H1 (cell line): ENCODE measurements at regions of chr3 and their contacts with region 1.

Region 1: DNA sequence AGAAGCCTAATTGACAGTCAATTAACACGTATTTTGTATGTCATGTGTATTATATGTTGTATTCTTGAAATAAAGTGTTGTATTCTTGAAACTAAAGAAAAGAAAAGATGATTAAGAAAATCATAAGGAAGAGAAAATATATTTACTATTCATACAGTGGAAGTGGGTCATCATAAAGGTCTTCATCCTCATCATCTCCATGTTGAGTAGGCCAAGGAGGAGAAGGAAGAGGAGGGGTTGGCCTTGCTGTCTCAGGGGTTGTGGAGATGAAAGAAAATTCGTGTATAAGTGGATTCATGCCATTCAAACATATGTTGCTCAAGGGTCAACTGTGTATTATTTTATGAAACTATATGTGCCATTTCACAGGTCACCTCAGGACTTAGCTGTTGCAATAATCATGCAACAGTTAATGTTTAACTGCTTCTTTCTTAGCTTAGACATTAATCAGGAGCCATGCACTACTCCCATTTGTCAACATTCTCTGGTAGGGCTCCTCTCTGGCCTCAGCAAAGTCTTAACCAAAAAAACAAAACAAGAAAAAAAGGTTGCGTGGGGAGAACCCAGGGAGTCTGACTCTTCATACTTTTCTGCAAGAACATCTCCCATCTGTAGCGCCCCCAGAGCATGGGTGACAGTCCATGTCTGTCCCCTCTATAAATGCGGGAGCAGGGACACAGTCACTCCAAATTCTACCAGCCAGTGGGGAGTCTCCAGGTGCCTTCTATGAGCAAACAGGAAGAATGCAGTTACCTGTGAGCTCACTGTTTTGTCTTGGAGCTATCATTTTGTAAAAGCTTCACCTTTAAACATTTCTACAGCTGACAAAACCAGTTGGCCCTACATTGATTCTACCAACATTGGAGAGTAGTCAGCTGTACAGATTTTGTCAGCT is 19.9 kb upstream of the LRRC2 start:
- DNase-seq: no peak
- H3K4me3 ChIP-seq: no peak overlapping the region
- H3K27ac ChIP-seq: no peak overlapping the region
- H3K4me1 ChIP-seq: peaks cover 0 to under 1% (median 0%) of the 10 kb centered on the region in 4 experiments; a peak in 1 of 7 replicates
- H3K27me3 ChIP-seq: no peaks in the 10 kb centered on the region
- CTCF ChIP-seq: no peak
- EP300 ChIP-seq: no peak
- POLR2A ChIP-seq: peak in 1 of 2 experiments; percentile 46; a peak in 1 of 3 replicates
- RAD21 ChIP-seq: no peak

Region 2: GRCh38 chr3:46496741-46497554 is 89.1 kb before region 1 on chr3:
- CTCF ChIA-PET with region 1: interaction called, 19 read pairs
- POLR2A ChIA-PET with region 1: interaction called, 21 read pairs
- DNase-seq: peak; percentile 36 to 75
- H3K4me3 ChIP-seq: no peak overlapping the region
- H3K27ac ChIP-seq: no peak overlapping the region
- H3K4me1 ChIP-seq: peaks cover 0 to 7% (median 1%) of the 10 kb centered on the region in 4 experiments; a peak in 2 of 7 replicates
- H3K27me3 ChIP-seq: peaks cover 0 to 4% (median 0%) of the 10 kb centered on the region in 4 experiments; a peak in 1 of 7 replicates
- CTCF ChIP-seq: peak; percentile 41 to 68 (median 60)
- EP300 ChIP-seq: no peak
- POLR2A ChIP-seq: no peak
- RAD21 ChIP-seq: peak; percentile 58 to 69

Region 3: DNA sequence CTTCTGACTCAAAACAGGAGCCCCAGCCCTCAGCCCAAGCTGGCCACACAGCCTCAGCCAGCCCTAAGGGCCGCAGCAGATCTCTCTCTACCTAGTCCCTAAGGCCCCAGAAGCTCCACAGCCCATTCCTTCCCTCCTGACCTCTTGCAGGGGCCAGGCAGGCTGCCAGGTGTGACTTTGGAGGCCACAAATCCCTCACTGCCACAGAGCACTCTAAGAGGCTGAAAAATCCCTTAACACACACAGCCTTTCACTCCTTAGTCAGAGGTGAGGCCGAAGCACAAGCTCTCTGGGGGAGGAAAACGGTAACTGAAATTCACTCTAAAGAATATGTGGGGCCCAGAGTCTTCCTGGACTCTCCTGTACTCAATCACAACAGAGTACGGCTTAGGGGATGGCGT is 43.2 kb before region 1 on chr3:
- CTCF ChIA-PET with region 1: interaction called, 4 read pairs
- POLR2A ChIA-PET with region 1: interaction called, 11 read pairs
- DNase-seq: no peak
- H3K4me3 ChIP-seq: no peak overlapping the region
- H3K27ac ChIP-seq: 0 out of 2 replicates have a peak overlapping the region, but pooled peaks have one; percentile 5
- H3K4me1 ChIP-seq: peaks cover 14 to 21% (median 18%) of the 10 kb centered on the region in 4 experiments
- H3K27me3 ChIP-seq: no peaks in the 10 kb centered on the region
- CTCF ChIP-seq: no peak
- EP300 ChIP-seq: no peak
- POLR2A ChIP-seq: no peak
- RAD21 ChIP-seq: no peak

Region 4: DNA sequence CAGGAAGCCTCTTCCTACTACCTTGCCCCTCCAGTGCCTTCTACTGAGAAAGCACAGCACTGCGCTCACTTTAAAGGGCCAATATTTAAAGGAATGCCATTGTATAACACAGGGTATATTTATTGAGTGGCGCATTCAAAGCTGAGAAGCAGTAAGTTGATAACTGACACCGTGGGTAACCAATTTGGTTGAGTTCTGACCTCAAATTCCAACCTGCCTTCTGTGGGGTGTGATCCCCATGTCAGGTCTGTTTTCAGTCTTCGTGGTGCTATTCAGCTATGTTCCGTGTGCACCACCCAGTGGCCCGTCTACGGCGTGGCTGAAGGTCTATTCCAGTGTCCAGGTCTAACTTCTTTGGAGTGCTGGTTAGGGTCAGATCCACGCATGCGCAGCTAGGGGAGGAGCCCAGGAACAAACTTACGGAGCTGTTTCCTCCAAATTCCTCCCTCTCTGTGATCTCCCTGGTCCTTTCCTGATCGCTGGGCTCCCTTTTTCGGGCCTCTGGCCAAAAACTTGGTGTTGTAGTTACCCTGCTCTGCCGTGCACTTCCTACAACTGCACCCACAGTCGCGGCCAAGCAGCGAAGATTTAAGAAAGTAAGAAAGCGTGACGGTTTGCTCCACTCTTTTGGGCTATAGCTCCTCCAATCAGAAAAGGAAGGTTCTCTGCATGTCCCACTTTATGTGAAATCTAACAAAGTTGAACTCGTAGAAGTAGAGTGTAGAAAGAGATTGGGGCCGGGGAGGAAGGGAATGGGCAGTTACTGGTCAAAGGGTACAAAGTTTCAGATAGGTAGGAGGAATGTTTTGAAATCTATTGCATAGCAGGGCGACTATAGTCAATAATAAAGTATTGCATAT is 27.6 kb before region 1 on chr3:
- CTCF ChIA-PET with region 1: interaction called, 9 read pairs
- POLR2A ChIA-PET with region 1: interaction called, 21 read pairs
- DNase-seq: peak in 1 of 2 experiments; percentile 57
- H3K4me3 ChIP-seq: peak overlapping the region in 1 of 4 experiments; percentile 13; a peak in 1 of 8 replicates
- H3K27ac ChIP-seq: no peak overlapping the region
- H3K4me1 ChIP-seq: peaks cover 3 to 12% (median 5%) of the 10 kb centered on the region in 4 experiments; a peak in 5 of 7 replicates
- H3K27me3 ChIP-seq: no peaks in the 10 kb centered on the region; a peak in 1 of 7 replicates
- CTCF ChIP-seq: peak; percentile 67 to 80 (median 71)
- EP300 ChIP-seq: no peak
- POLR2A ChIP-seq: no peak
- RAD21 ChIP-seq: peak; percentile 81 to 85

Region 5: DNA sequence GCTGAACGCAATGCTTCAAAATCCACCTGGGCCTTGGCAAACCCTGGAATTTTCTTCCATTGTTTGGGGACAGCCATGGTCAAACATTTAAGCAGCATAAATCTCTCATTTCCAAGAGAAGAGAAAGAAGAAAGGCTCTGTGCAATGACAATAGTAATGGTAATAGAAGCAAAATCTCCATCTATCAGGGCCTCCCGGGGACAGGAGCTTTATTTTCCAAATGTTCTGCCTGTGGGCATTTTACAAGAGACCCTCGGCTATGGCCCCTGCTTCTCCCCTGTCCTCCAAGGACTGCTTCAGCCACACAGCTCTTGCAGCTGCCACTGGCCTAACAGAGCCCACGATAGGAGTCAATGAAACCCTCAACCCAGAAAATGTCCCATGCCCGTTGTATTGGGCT is 13.5 kb after region 1 on chr3:
- CTCF ChIA-PET with region 1: interaction called, 6 read pairs
- POLR2A ChIA-PET with region 1: interaction called, 85 read pairs
- DNase-seq: no peak
- H3K4me3 ChIP-seq: peak overlapping the region in 1 of 4 experiments; percentile 18; a peak in 1 of 8 replicates
- H3K27ac ChIP-seq: peak overlapping the region; percentile 17; the same call in 1 of the 2 replicates
- H3K4me1 ChIP-seq: peaks cover 10 to 22% (median 15%) of the 10 kb centered on the region in 4 experiments; a peak in 6 of 7 replicates
- H3K27me3 ChIP-seq: 0 out of 7 replicates have a peak, but pooled peaks cover 0 to 3% (median 0%) of the 10 kb centered on the region in 4 experiments
- CTCF ChIP-seq: no peak
- EP300 ChIP-seq: no peak
- POLR2A ChIP-seq: no peak
- RAD21 ChIP-seq: no peak

Region 6: DNA sequence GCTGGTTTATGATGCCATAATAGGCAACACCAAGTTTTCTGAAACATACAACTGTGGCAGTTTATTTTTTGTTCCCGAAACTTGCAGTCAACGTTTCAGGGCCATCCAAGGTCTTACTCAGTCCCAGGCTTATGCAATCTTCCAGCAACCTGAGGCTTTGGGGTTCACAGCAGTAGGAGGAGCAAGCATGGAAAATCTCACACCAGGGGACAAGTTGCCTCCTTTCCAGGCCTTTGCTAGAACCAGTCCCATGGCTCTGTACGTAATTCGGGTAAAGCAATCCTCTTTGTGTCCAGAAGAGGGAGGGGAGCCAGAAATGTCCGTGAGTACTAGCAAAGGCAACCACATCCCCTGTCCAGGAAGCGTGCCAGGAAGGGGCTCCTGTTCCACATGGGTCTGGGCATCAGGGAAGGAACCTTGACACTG is 21.6 kb after region 1 on chr3:
- CTCF ChIA-PET with region 1: interaction called, 4 read pairs
- POLR2A ChIA-PET with region 1: interaction called, 27 read pairs
- DNase-seq: peak in 1 of 2 experiments; percentile 58
- H3K4me3 ChIP-seq: no peak overlapping the region
- H3K27ac ChIP-seq: no peak overlapping the region
- H3K4me1 ChIP-seq: peaks cover 3 to 23% (median 9%) of the 10 kb centered on the region in 4 experiments
- H3K27me3 ChIP-seq: no peaks in the 10 kb centered on the region
- CTCF ChIP-seq: peak; percentile 31 to 72 (median 68)
- EP300 ChIP-seq: no peak
- POLR2A ChIP-seq: no peak
- RAD21 ChIP-seq: peak; percentile 49 to 68

Region 7: GRCh38 chr3:46646700-46647099 is 60.7 kb after region 1 on chr3:
- CTCF ChIA-PET with region 1: no interaction called
- POLR2A ChIA-PET with region 1: no interaction called
- DNase-seq: peak in 1 of 2 experiments; percentile 37
- H3K4me3 ChIP-seq: no peak overlapping the region
- H3K27ac ChIP-seq: no peak overlapping the region
- H3K4me1 ChIP-seq: no peaks in the 10 kb centered on the region
- H3K27me3 ChIP-seq: no peaks in the 10 kb centered on the region
- CTCF ChIP-seq: no peak
- EP300 ChIP-seq: no peak
- POLR2A ChIP-seq: no peak
- RAD21 ChIP-seq: no peak

Region 8: GRCh38 chr3:46663591-46664135 is 77.6 kb after region 1 on chr3:
- CTCF ChIA-PET with region 1: interaction called, 4 read pairs
- POLR2A ChIA-PET with region 1: interaction called, 23 read pairs
- DNase-seq: peak in 1 of 2 experiments; percentile 62
- H3K4me3 ChIP-seq: no peak overlapping the region
- H3K27ac ChIP-seq: no peak overlapping the region
- H3K4me1 ChIP-seq: peaks cover 22 to 41% (median 28%) of the 10 kb centered on the region in 4 experiments
- H3K27me3 ChIP-seq: no peaks in the 10 kb centered on the region; a peak in 1 of 7 replicates
- CTCF ChIP-seq: peak in 2 of 3 experiments; percentile 63 to 70; a peak in 3 of 4 replicates
- EP300 ChIP-seq: no peak
- POLR2A ChIP-seq: no peak
- RAD21 ChIP-seq: peak; percentile 72 to 83

Region 9: GRCh38 chr3:46748170-46748569 is 162.1 kb after region 1 on chr3:
- CTCF ChIA-PET with region 1: no interaction called
- POLR2A ChIA-PET with region 1: no interaction called
- DNase-seq: no peak
- H3K4me3 ChIP-seq: no peak overlapping the region
- H3K27ac ChIP-seq: no peak overlapping the region
- H3K4me1 ChIP-seq: no peaks in the 10 kb centered on the region; a peak in 1 of 7 replicates
- H3K27me3 ChIP-seq: no peaks in the 10 kb centered on the region
- CTCF ChIP-seq: no peak
- EP300 ChIP-seq: no peak
- POLR2A ChIP-seq: no peak
- RAD21 ChIP-seq: no peak